ENCODE measurements at regions of chr10 and their contacts with region 1.

Region 1: DNA sequence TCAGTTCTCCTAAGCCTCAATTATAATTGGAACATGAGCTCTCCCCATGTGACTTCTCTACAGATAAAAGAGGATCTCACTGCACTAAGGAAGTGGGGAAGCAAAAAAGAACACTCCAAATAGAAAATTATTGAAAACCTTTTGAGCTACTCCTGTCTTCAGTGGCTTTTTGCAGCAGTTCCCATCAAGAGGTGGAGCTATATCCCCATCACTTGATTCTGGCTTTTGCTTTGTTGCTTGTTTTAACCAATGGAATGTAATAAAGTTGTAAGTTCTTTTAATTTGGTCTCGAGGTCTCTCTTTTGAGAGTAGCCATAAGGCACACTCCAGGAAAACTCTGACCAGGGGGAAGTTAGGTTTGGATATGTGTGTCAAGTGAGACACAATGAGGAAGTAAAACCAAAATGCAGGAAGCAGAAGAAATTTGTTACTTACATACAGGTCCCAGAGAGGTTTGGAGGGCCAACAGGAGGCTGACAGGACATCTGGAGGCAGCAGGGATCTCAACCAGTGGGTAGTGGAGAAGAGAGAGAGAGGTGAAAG is 569.4 kb downstream of the HTR7 start:
- DNase-seq: no peak
- H3K4me3 ChIP-seq: no peak overlapping the region
- H3K27ac ChIP-seq: no peak overlapping the region
- H3K4me1 ChIP-seq: peaks cover 0 to 11% (median 0%) of the 10 kb centered on the region in 4 experiments; a peak in 1 of 7 replicates
- H3K27me3 ChIP-seq: no peaks in the 10 kb centered on the region
- CTCF ChIP-seq: peak in 2 of 3 experiments; percentile 33 to 52; a peak in 3 of 4 replicates
- EP300 ChIP-seq: no peak
- POLR2A ChIP-seq: no peak
- RAD21 ChIP-seq: peak; percentile 79 to 80

Region 2: DNA sequence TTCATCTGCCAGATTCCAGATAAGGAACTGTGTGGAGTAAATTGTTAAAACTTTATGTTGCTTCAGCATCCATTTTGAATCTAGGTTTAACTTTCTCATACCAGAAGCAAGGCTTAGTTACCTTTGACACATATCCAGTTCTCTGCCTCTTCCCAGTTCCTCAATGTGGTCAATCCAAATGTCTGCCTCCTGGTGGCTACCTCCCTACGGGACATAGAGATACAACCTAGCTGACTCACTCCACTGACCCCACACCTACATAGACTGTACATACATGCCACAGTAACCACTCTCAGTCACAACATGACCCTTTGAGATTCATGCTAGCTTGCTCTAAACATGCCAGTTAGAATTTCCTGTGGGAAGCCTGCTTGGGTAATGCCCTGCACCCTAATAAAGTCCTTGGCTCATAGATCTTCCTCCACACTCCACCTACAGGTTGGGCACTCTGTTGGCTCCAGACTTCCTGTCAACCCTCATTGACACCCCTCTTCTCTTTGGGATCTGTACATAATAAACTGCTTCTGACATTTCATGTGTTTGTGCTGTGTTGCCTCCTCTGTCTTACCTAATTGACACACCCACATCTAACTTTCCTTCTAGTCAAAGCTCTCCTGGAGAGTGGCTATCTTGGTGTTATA is 291.3 kb after region 1 on chr10:
- CTCF ChIA-PET with region 1: interaction called, 11 read pairs
- POLR2A ChIA-PET with region 1: no interaction called
- DNase-seq: peak in 1 of 2 experiments; percentile 15
- H3K4me3 ChIP-seq: no peak overlapping the region
- H3K27ac ChIP-seq: no peak overlapping the region
- H3K4me1 ChIP-seq: no peaks in the 10 kb centered on the region
- H3K27me3 ChIP-seq: no peaks in the 10 kb centered on the region
- CTCF ChIP-seq: peak; percentile 44 to 61 (median 56)
- EP300 ChIP-seq: no peak
- POLR2A ChIP-seq: no peak
- RAD21 ChIP-seq: peak; percentile 58 to 69

Measured in H1 (cell line).